ENCODE measurements at regions of chr5 and their contacts with region 1.

Region 1: DNA sequence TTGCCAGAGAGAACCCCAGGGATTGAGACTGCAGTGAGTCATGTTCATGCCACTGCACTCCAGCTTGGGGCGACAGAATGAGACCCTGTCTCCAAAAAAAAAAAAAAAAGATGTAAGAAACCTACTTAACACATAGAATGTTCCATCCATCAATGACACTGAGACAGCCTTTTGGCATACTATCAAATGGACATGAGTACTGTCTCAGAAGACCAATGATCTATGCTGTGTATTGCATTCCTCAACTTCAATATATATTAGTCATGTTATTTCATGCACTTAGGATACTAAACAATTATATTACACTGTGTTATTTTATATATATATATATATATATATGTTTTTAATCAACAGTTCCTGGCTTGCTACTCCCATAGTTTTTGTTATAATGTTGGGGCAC is 57.1 kb upstream of the ANKH start:
- DNase-seq: peak; percentile 32
- H3K4me3 ChIP-seq: no peak overlapping the region
- H3K27ac ChIP-seq: no peak overlapping the region
- H3K4me1 ChIP-seq: peaks cover 26% of the 10 kb centered on the region
- H3K27me3 ChIP-seq: no peaks in the 10 kb centered on the region
- CTCF ChIP-seq: no peak

Region 2: GRCh38 chr5:14733661-14734060 is 195.0 kb before region 1 on chr5:
- CTCF ChIA-PET with region 1: interaction called, 21 read pairs
- dilution Hi-C with region 1: no loop called
- in situ Hi-C with region 1: no loop called
- intact Hi-C with region 1: no loop called
- DNase-seq: no peak
- H3K4me3 ChIP-seq: no peak overlapping the region
- H3K27ac ChIP-seq: no peak overlapping the region
- H3K4me1 ChIP-seq: no peaks in the 10 kb centered on the region
- H3K27me3 ChIP-seq: no peaks in the 10 kb centered on the region
- CTCF ChIP-seq: no peak

Region 3: GRCh38 chr5:14895301-14895700 is 33.4 kb before region 1 on chr5:
- CTCF ChIA-PET with region 1: no interaction called
- dilution Hi-C with region 1: no loop called
- in situ Hi-C with region 1: no loop called
- intact Hi-C with region 1: no loop called
- DNase-seq: no peak
- H3K4me3 ChIP-seq: no peak overlapping the region
- H3K27ac ChIP-seq: no peak overlapping the region
- H3K4me1 ChIP-seq: no peaks in the 10 kb centered on the region
- H3K27me3 ChIP-seq: no peaks in the 10 kb centered on the region
- CTCF ChIP-seq: no peak

Region 4: GRCh38 chr5:14958196-14958595 is 29.5 kb after region 1 on chr5:
- CTCF ChIA-PET with region 1: interaction called, 12 read pairs
- dilution Hi-C with region 1: no loop called
- in situ Hi-C with region 1: no loop called
- intact Hi-C with region 1: no loop called
- DNase-seq: peak; percentile 56
- H3K4me3 ChIP-seq: no peak overlapping the region
- H3K27ac ChIP-seq: no peak overlapping the region
- H3K4me1 ChIP-seq: peaks cover 19% of the 10 kb centered on the region
- H3K27me3 ChIP-seq: no peaks in the 10 kb centered on the region
- CTCF ChIP-seq: no peak